CD4-positive, alpha-beta T cell (primary cell): ENCODE measurements at regions of chr17 and their contacts with region 1.

Region 1: GRCh38 chr17:1716076-1716995 is 6.2 kb upstream of the TLCD2 start:
- DNase-seq: peak; percentile 99 to 100 (median 100)
- ATAC-seq: peak; percentile 89
- H3K4me3 ChIP-seq: peak overlapping the region; percentile 94
- H3K4me3 Mint-ChIP-seq: peak overlapping the region; percentile 95
- H3K27ac ChIP-seq: peak overlapping the region; percentile 84 to 96
- H3K27ac Mint-ChIP-seq: peak overlapping the region; percentile 89
- H3K4me1 ChIP-seq: peaks cover 52% of the 10 kb centered on the region
- H3K4me1 Mint-ChIP-seq: peaks cover 35% of the 10 kb centered on the region
- H3K27me3 ChIP-seq: peaks cover 4 to 13% of the 10 kb centered on the region in 2 experiments
- H3K27me3 Mint-ChIP-seq: peaks cover 9% of the 10 kb centered on the region
- CTCF ChIP-seq: no peak

Region 2: DNA sequence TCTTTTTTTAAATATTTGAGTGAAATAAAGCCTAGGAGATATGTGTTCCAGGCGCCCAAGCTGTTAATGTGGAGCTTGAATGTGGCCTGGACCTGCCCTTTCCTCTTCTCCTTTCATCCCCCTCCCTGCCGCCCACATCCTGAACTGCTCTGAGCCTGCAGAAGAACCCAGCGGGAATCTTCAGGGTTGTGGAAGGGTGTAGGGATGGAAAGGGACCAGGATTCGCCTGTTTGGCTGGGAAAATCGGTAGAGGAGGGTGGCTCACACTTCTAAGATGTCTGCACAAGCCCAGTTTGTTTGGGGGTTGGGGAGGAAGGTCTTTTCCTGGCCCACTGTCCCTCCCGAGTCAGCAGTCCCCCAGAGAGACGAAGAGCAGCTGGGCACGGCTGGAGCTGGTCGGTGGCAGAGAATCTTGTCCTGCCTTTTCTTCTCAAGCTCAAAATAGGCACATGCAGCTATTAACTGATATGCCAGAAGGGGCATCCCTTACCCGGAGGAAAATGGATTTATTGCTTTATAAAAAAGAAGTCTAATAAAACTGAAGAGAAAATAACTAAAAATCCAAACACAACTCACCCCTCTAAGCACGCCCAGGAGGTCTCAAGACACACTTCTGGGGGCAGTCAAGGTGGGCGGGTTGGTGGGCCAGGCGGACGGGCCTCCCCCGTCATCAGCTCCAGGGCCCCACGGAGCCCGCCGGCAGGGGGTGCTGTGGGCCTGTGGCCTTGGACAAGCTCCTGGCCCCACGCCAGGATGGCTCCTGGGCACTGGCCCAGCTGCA is 142.2 kb before region 1 on chr17:
- CTCF ChIA-PET with region 1: no interaction called
- POLR2A ChIA-PET with region 1: no interaction called
- intact Hi-C with region 1: no loop called
- DNase-seq: peak in 13 of 14 experiments; percentile 17 to 76 (median 40)
- ATAC-seq: peak; percentile 56
- H3K4me3 ChIP-seq: no peak overlapping the region
- H3K4me3 Mint-ChIP-seq: no peak overlapping the region
- H3K27ac ChIP-seq: no peak overlapping the region
- H3K27ac Mint-ChIP-seq: no peak overlapping the region
- H3K4me1 ChIP-seq: peaks cover 26% of the 10 kb centered on the region
- H3K4me1 Mint-ChIP-seq: no peaks in the 10 kb centered on the region
- H3K27me3 ChIP-seq: no peaks in the 10 kb centered on the region
- H3K27me3 Mint-ChIP-seq: no peaks in the 10 kb centered on the region
- CTCF ChIP-seq: peak; percentile 64

Region 3: GRCh38 chr17:1648963-1649843 is 67.1 kb before region 1 on chr17:
- CTCF ChIA-PET with region 1: interaction called, 11 read pairs
- POLR2A ChIA-PET with region 1: interaction called, 24 read pairs
- intact Hi-C with region 1: loop called in 1 of 2 experiments (anchors 2 kb)
- DNase-seq: peak; percentile 89 to 99 (median 95)
- ATAC-seq: peak; percentile 78
- H3K4me3 ChIP-seq: peak overlapping the region; percentile 51
- H3K4me3 Mint-ChIP-seq: peak overlapping the region; percentile 79
- H3K27ac ChIP-seq: peak overlapping the region; percentile 45 to 53
- H3K27ac Mint-ChIP-seq: peak overlapping the region; percentile 33
- H3K4me1 ChIP-seq: peaks cover 41% of the 10 kb centered on the region
- H3K4me1 Mint-ChIP-seq: peaks cover 18% of the 10 kb centered on the region
- H3K27me3 ChIP-seq: no peaks in the 10 kb centered on the region
- H3K27me3 Mint-ChIP-seq: no peaks in the 10 kb centered on the region
- CTCF ChIP-seq: peak; percentile 75

Region 4: GRCh38 chr17:1684378-1685189 is 31.8 kb before region 1 on chr17 and contains the start of gene PRPF8:
- CTCF ChIA-PET with region 1: no interaction called
- POLR2A ChIA-PET with region 1: interaction called, 52 read pairs
- intact Hi-C with region 1: loop called (anchors 1 to 2 kb)
- DNase-seq: peak; percentile 97 to 99 (median 98)
- ATAC-seq: peak; percentile 96
- H3K4me3 ChIP-seq: peak within 1 kb of the TSS; percentile 93
- H3K4me3 Mint-ChIP-seq: peak within 1 kb of the TSS; percentile 99
- H3K27ac ChIP-seq: peak within 1 kb of the TSS; percentile 86 to 95
- H3K27ac Mint-ChIP-seq: peak within 1 kb of the TSS; percentile 96
- H3K4me1 ChIP-seq: peaks cover 33% of the 10 kb centered on the region
- H3K4me1 Mint-ChIP-seq: peaks cover 49% of the 10 kb centered on the region
- H3K27me3 ChIP-seq: no peaks in the 10 kb centered on the region
- H3K27me3 Mint-ChIP-seq: no peaks in the 10 kb centered on the region
- CTCF ChIP-seq: no peak
- total RNA-seq, gene PRPF8: 550 to 572 TPM

Region 5: GRCh38 chr17:1783834-1784611 is 67.7 kb after region 1 on chr17:
- CTCF ChIA-PET with region 1: interaction called, 11 read pairs
- POLR2A ChIA-PET with region 1: interaction called, 18 read pairs
- intact Hi-C with region 1: loop called (anchors 1 to 5 kb)
- DNase-seq: peak in 3 of 14 experiments; percentile 31 to 65 (median 54)
- ATAC-seq: peak; percentile 68
- H3K4me3 ChIP-seq: no peak overlapping the region
- H3K4me3 Mint-ChIP-seq: no peak overlapping the region
- H3K27ac ChIP-seq: no peak overlapping the region
- H3K27ac Mint-ChIP-seq: peak overlapping the region; percentile 76
- H3K4me1 ChIP-seq: peaks cover 10% of the 10 kb centered on the region
- H3K4me1 Mint-ChIP-seq: peaks cover 10% of the 10 kb centered on the region
- H3K27me3 ChIP-seq: no peaks in the 10 kb centered on the region
- H3K27me3 Mint-ChIP-seq: no peaks in the 10 kb centered on the region
- CTCF ChIP-seq: peak; percentile 53

Region 6: DNA sequence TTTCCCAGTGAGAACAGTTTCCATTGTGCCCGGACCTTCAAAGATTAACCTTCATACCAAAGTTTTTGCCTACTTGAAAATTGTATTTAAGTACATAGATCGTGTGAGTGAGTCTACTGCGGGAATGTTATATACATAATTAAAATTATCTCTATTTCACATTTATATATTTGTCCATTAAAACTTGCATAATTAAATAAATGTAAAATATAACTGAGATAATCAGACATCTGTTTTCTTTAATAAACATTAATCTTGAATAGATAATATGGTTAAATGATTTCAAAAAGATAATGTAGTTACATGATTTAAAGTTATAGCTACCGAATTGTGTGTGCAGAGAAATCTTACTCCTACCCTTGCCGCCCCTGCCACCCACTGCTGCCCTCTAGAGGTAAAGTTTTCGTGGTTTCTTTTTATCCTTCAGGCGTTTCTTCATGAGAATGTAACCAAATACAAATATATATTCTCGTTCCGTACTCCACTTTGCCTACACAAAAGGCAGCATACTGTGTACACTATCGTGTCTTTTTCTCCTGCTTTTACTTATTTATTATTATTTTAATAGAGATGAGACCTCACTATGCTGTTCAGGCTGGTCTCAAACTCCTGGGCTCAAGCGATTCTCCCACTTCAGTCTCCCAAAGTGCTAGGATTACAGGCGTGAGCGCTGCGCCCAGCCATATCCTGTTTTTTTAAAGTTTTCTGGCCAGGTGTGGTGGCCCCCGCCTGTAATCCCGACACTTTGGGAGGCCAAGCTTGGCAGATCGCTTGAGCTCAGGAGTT is 149.1 kb after region 1 on chr17:
- CTCF ChIA-PET with region 1: interaction called, 13 read pairs
- POLR2A ChIA-PET with region 1: interaction called, 11 read pairs
- intact Hi-C with region 1: loop called (anchors 1 to 2 kb)
- DNase-seq: peak; percentile 20 to 80 (median 41)
- ATAC-seq: peak; percentile 70
- H3K4me3 ChIP-seq: no peak overlapping the region
- H3K4me3 Mint-ChIP-seq: no peak overlapping the region
- H3K27ac ChIP-seq: no peak overlapping the region
- H3K27ac Mint-ChIP-seq: no peak overlapping the region
- H3K4me1 ChIP-seq: peaks cover 15% of the 10 kb centered on the region
- H3K4me1 Mint-ChIP-seq: peaks cover 24% of the 10 kb centered on the region
- H3K27me3 ChIP-seq: no peaks in the 10 kb centered on the region
- H3K27me3 Mint-ChIP-seq: no peaks in the 10 kb centered on the region
- CTCF ChIP-seq: peak; percentile 81

Region 7: GRCh38 chr17:2041561-2042366 is 325.4 kb after region 1 on chr17 and contains the start of gene OVCA2:
- CTCF ChIA-PET with region 1: interaction called, 3 read pairs
- POLR2A ChIA-PET with region 1: interaction called, 4 read pairs
- intact Hi-C with region 1: loop called in 1 of 2 experiments (anchors 2 kb)
- DNase-seq: peak; percentile 96 to 99 (median 97)
- ATAC-seq: peak; percentile 92
- H3K4me3 ChIP-seq: peak within 1 kb of the TSS; percentile 73
- H3K4me3 Mint-ChIP-seq: peak within 1 kb of the TSS; percentile 92
- H3K27ac ChIP-seq: peak within 1 kb of the TSS; percentile 83 to 88
- H3K27ac Mint-ChIP-seq: peak within 1 kb of the TSS; percentile 86
- H3K4me1 ChIP-seq: peaks cover 29% of the 10 kb centered on the region
- H3K4me1 Mint-ChIP-seq: peaks cover 18% of the 10 kb centered on the region
- H3K27me3 ChIP-seq: no peaks in the 10 kb centered on the region
- H3K27me3 Mint-ChIP-seq: no peaks in the 10 kb centered on the region
- CTCF ChIP-seq: peak; percentile 54
- total RNA-seq, gene OVCA2: 34.4 to 35.1 TPM

Region 8: DNA sequence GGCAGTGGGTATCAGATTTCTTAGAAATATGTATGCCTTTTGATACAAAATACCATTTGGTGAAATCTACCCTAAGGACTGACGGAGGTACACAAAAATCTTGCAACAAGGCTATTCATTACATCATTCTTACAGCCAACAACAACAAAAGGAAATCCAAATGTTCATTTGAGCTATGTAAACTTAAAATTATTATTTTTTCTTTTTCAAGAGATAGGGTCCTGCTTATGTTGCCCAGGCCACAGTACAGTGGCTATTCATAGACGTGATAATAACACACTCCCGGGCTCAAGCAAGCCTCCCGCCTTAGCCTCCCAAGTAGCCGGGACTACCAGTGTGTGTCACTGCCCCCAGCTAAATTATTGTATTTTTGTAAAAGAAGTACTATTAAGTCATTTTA is 596.4 kb after region 1 on chr17:
- CTCF ChIA-PET with region 1: no interaction called
- POLR2A ChIA-PET with region 1: no interaction called
- intact Hi-C with region 1: no loop called
- DNase-seq: no peak
- ATAC-seq: no peak
- H3K4me3 ChIP-seq: no peak overlapping the region
- H3K4me3 Mint-ChIP-seq: no peak overlapping the region
- H3K27ac ChIP-seq: no peak overlapping the region
- H3K27ac Mint-ChIP-seq: no peak overlapping the region
- H3K4me1 ChIP-seq: no peaks in the 10 kb centered on the region
- H3K4me1 Mint-ChIP-seq: peaks cover 6% of the 10 kb centered on the region
- H3K27me3 ChIP-seq: no peaks in the 10 kb centered on the region
- H3K27me3 Mint-ChIP-seq: no peaks in the 10 kb centered on the region
- CTCF ChIP-seq: no peak